Left ventricle myocardium superior (tissue), 1 donor: ENCODE measurements at regions of chr1 and their contacts with region 1.

Region 1: DNA sequence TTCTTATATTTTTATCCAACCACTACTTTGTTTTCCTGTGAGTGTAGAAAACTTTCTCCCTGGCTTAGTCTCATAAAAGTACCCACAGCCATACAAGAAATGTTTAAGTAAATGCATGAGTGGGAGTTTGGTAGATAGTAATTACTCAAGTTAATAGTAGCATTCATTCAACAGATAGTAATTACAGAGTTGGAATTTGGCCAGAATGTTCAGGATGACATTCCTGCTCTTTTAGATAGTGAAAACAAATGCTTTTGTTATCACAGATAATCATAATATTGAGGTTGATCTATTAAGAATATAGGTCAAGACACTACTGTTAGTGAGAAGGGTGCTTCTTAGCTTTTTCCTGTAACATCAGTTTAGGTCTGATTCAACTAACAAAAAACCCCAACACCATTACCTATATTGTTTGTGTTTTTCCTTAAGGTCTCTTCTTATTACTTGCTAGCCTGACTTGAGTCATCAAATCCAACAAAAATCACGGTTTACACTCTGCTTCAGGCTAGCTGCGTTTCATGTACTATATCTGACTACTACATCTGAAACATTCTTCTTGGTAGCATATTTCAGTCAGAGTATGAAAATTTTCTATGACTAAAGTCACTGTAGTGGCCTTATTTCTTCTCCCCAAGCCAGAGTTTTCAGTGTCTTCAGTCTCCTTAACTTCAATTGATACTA is 163.7 kb downstream of the HS2ST1 start:
- DNase-seq: no peak
- ATAC-seq: no peak

Region 2: GRCh38 chr1:87007323-87007722 is 70.8 kb before region 1 on chr1:
- intact Hi-C with region 1: no loop called
- DNase-seq: no peak
- ATAC-seq: no peak

Region 3: DNA sequence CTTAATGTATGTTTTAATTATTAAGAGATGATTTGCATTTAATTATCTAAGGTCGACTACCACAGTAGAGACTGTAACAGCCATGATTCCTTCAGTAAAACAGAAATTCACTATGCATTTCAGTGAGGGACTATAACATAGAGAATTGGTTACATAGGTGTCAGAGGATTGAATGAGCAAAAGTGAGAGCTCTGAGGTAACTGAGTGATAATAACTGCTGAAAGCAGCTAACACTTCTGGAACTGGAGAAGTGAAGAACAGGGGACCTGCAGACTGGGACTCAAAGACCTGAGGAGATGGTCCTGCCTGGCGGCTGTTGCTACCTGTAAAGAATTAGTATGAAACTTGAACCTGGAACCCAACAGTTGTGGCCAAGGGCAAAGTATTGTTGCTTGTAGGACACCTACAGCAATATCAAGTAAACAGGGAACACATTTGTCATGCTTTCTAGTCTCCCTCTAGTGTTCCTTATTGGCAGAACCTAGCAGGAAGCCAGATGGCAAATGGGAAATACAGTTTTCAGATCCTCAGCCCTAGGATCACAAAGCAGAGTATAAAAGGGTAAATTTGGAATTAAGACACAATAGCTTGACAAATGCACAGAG is 53.1 kb before region 1 on chr1:
- intact Hi-C with region 1: loop called (anchors 5 kb)
- DNase-seq: no peak
- ATAC-seq: peak; percentile 58

Region 4: GRCh38 chr1:87243573-87243972 is 165.5 kb after region 1 on chr1:
- intact Hi-C with region 1: no loop called
- DNase-seq: no peak
- ATAC-seq: no peak